ENCODE measurements at regions of chr17 and their contacts with region 1.

Region 1: DNA sequence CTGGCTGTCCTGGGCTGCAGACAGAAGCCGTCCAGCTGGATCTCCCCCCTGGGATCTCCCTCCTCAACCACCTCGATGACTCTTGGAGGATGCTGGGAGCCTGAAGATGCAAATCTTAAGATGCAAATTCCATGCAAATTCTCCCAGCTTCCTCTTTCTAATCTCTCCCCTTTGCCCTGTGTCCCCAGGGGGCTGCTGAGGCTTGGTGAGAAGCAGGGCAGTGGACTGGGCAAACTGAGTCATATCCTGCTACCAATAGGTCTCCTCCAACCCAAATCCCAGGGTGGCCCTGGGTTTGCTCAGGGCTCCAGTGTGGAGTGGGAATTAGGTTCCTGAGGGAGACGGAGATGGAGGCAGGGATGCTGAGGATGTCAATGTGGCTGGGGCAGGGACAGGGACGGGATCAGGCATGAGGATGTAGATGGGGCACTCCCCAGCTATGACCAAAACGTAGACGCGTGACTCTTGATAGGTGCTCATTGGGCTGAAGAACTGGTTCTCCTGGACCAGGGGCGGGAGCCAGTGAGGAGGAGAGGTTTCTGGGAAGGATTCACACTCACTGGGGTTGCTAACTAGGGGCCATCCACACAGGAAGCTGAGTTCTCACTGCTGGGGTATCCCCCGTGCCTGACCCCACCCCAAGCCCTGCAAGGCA is 3.6 kb upstream of the ALOX12B start:
- DNase-seq: no peak
- H3K4me3 ChIP-seq: no peak overlapping the region
- H3K4me3 Mint-ChIP-seq: no peak overlapping the region
- H3K27ac ChIP-seq: no peak overlapping the region
- H3K27ac Mint-ChIP-seq: no peak overlapping the region
- H3K4me1 ChIP-seq: peaks cover 4% of the 10 kb centered on the region
- H3K4me1 Mint-ChIP-seq: peaks cover 6 to 7% (median 7%) of the 10 kb centered on the region in 3 donors
- H3K27me3 ChIP-seq: peaks cover 5% of the 10 kb centered on the region
- H3K27me3 Mint-ChIP-seq: peaks cover 25 to 42% of the 10 kb centered on the region in 2 donors

Region 2: GRCh38 chr17:8048236-8048635 is 42.9 kb before region 1 on chr17:
- CTCF ChIA-PET with region 1: no interaction called
- POLR2A ChIA-PET with region 1: no interaction called
- DNase-seq: no peak
- H3K4me3 ChIP-seq: no peak overlapping the region
- H3K4me3 Mint-ChIP-seq: no peak overlapping the region
- H3K27ac ChIP-seq: no peak overlapping the region
- H3K27ac Mint-ChIP-seq: peak overlapping the region in 1 of 8 donors; percentile 76
- H3K4me1 ChIP-seq: no peaks in the 10 kb centered on the region
- H3K4me1 Mint-ChIP-seq: no peaks in the 10 kb centered on the region
- H3K27me3 ChIP-seq: no peaks in the 10 kb centered on the region
- H3K27me3 Mint-ChIP-seq: peaks cover 6 to 9% of the 10 kb centered on the region in 2 donors

Region 3: DNA sequence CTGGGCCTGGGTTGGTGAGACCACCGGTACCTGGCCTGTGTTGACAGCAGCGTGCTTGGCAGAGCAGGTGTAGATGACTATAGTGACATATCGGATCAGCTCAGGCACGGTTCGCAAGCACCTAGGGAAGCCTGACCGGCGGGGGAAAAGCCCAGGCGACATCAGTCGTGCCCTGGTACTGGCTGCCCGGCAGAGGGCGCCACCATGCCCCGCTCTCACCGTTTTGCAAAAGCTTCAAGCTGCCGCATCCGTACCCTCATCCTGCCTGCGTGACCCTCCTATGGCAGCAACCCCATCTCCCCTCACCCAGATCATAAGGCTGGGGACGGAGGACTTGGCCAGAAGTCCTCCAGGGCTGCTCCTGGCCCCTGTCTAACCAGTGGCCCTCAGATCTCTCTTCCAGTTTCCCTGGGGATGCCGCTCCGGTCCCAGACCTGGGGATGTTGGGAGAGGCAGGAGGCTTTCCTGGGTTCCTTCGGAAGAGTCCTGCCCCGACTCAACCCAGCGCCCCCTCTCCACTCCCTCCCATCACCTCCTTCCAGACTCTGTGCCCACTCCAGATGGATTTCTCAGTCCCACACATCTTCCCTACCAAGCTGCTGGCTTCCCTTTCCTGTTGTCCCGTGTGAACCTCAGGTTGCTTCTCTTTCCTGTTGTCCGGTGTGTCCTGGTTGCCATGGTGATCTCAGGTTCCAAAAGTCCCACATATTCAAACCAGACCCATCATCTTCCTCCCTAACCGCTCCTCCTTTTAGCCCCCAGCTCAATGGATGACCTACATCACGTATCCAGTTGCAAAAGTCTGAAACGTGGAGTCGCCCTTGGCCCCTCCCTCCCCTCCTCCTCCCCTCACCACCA is 17.3 kb before region 1 on chr17:
- CTCF ChIA-PET with region 1: interaction called, 34 read pairs
- POLR2A ChIA-PET with region 1: no interaction called
- DNase-seq: peak; percentile 70 to 85 (median 80)
- H3K4me3 ChIP-seq: peak overlapping the region; percentile 51
- H3K4me3 Mint-ChIP-seq: peak overlapping the region; percentile 16 to 86 (median 81)
- H3K27ac ChIP-seq: no peak overlapping the region
- H3K27ac Mint-ChIP-seq: peak overlapping the region in 5 of 8 donors; percentile 47 to 91 (median 78)
- H3K4me1 ChIP-seq: peaks cover 25% of the 10 kb centered on the region
- H3K4me1 Mint-ChIP-seq: peaks cover 16 to 25% (median 19%) of the 10 kb centered on the region in 3 donors
- H3K27me3 ChIP-seq: peaks cover 17% of the 10 kb centered on the region
- H3K27me3 Mint-ChIP-seq: peaks cover 36 to 47% of the 10 kb centered on the region in 2 donors

Region 4: DNA sequence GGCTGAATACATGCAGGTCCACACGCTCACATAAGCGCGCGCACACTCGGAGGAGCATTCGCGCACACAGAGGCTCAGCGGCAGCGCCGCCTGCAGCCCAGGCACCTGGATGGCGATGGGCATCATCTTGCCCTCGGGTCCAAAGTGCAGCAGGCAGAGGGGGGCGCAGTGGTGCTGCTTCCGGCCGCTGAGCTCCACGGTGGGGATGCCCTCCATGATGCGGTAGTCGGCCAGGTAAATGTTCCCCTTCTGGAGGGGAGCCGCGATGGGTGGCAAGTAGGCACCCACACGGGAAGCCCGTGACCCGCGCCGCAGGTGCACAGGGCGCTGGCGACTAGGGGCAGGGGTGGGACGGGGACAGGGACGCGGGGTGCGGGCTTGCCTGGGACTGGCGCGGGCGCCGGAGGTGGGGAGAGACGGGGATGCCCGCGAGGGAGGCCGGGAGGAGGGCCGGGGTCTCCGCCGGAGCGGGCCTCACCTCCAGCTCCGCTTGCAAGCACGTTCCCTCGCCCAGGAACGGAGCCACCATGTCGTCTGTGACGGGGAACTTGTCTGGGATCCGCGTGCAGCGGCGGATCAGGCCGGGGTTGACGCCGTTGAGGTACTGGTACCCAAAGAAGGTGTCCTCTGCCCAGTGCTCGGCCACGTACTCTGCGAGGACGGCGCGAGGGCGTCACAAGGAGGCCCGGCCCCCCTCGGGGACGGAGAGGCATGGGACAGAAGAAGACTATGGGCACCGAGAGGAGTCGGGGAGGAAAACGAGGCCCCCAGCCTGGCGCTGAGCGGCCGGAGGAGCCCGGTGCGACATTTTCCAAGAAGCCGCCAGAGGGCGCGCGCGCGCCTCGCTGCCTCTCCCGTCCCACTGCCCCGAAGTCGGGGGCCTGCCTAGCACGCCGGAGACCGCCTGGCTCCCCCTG is 11.6 kb before region 1 on chr17:
- CTCF ChIA-PET with region 1: interaction called, 34 read pairs
- POLR2A ChIA-PET with region 1: interaction called, 3 read pairs
- DNase-seq: peak; percentile 68 to 85 (median 72)
- H3K4me3 ChIP-seq: peak overlapping the region; percentile 78
- H3K4me3 Mint-ChIP-seq: peak overlapping the region; percentile 70 to 95 (median 92)
- H3K27ac ChIP-seq: peak overlapping the region; percentile 57
- H3K27ac Mint-ChIP-seq: peak overlapping the region; percentile 24 to 92 (median 84)
- H3K4me1 ChIP-seq: peaks cover 15% of the 10 kb centered on the region
- H3K4me1 Mint-ChIP-seq: peaks cover 4 to 20% (median 16%) of the 10 kb centered on the region in 3 donors
- H3K27me3 ChIP-seq: peaks cover 8% of the 10 kb centered on the region
- H3K27me3 Mint-ChIP-seq: peaks cover 7 to 10% of the 10 kb centered on the region in 2 donors

Region 5: DNA sequence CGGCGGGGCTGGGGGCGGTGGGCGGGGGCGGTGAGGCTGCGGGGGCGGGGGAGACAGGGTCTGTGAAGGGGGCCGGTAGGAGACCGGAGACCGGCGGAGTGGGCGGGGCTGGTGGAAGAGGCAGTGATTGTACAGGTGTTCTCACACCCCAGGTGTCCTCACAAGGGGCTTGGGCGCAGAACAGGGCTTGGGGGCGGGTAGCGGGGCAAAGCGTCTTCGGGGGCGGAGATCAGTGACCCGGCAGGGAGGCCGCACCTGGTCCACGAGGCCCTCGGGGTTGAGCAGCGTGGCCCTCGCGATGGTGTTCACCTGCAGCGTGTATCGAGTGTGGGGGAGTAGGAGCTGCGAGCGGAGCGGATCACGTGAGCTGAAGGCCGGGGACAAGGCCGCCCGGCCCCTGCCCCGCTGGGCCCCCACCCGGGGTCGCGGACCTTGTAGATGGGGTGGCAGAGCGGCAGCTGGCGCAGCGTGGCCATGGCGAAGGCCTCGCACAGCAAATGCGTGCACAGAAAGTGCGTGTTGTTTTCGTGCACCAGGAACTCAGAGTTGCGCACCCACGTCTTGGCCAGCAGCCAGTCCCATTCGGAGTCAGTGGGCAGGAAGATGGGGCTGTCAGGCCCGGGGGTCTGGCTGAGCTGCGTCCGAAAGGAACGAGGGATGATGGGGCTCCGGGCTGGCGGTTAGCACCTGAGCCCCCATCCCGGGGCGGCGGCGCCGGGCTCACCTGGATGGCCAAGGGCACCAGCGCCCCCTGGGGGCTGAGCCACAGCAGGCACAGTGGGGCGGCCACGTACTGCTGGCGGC is 18.7 kb after region 1 on chr17:
- CTCF ChIA-PET with region 1: interaction called, 97 read pairs
- POLR2A ChIA-PET with region 1: no interaction called
- DNase-seq: peak; percentile 74 to 86 (median 76)
- H3K4me3 ChIP-seq: peak overlapping the region; percentile 65
- H3K4me3 Mint-ChIP-seq: peak overlapping the region in 5 of 7 donors; percentile 66 to 72 (median 69)
- H3K27ac ChIP-seq: no peak overlapping the region
- H3K27ac Mint-ChIP-seq: peak overlapping the region in 1 of 8 donors; percentile 23
- H3K4me1 ChIP-seq: no peaks in the 10 kb centered on the region
- H3K4me1 Mint-ChIP-seq: peaks cover 0 to 5% (median 2%) of the 10 kb centered on the region in 3 donors
- H3K27me3 ChIP-seq: peaks cover 27% of the 10 kb centered on the region
- H3K27me3 Mint-ChIP-seq: peaks cover 27 to 34% of the 10 kb centered on the region in 2 donors

Region 6: GRCh38 chr17:8156246-8156992 is 65.3 kb after region 1 on chr17:
- CTCF ChIA-PET with region 1: interaction called, 16 read pairs
- POLR2A ChIA-PET with region 1: no interaction called
- DNase-seq: peak; percentile 100
- H3K4me3 ChIP-seq: peak overlapping the region; percentile 100
- H3K4me3 Mint-ChIP-seq: no peak overlapping the region
- H3K27ac ChIP-seq: peak overlapping the region; percentile 100
- H3K27ac Mint-ChIP-seq: no peak overlapping the region
- H3K4me1 ChIP-seq: peaks cover 77% of the 10 kb centered on the region
- H3K4me1 Mint-ChIP-seq: peaks cover 32 to 73% (median 48%) of the 10 kb centered on the region in 3 donors
- H3K27me3 ChIP-seq: no peaks in the 10 kb centered on the region
- H3K27me3 Mint-ChIP-seq: peaks cover 0 to 14% of the 10 kb centered on the region in 2 donors

Region 7: DNA sequence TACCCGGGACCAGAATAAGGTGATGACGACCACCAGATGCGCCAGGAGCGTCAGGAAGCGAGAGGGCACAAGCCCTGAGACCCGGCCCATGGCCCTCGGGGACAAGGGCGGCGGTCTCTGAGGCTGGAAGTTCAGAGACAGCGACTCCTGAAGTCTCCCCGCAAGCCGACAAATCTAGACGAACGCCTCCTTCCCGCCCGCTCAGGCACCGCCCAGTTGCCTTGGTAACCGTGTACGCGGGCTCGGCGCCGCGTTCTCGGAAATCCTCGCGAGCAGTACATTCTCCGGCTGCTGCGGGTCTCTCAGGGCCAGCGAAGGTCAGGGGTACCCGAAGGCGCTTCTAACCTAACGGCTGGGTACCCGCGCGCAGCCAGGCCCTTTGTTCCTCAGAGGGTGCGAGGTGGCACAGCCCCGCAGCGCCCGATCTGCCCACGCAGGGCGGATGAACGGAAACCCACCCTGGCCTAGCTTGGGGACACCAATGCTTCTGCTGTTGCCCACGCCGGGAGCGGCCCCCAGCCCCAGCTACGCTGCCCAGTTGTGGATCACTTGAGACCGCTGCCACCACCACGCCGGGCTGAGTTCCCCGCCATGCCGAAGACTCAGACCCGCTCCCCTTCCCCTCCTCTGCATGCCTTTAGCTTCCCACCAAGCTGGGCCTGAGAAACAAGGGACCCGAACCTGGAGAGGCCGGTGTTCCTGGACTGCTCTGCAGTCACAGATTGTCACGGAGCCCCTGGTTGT is 85.2 kb after region 1 on chr17 and contains the start of gene TMEM107:
- CTCF ChIA-PET with region 1: no interaction called
- POLR2A ChIA-PET with region 1: no interaction called
- DNase-seq: peak; percentile 81 to 92 (median 82)
- H3K4me3 ChIP-seq: peak within 1 kb of the TSS; percentile 76
- H3K4me3 Mint-ChIP-seq: peak within 1 kb of the TSS; percentile 89 to 96 (median 93)
- H3K27ac ChIP-seq: peak within 1 kb of the TSS; percentile 81
- H3K27ac Mint-ChIP-seq: peak within 1 kb of the TSS; percentile 92 to 100 (median 96)
- H3K4me1 ChIP-seq: peaks cover 44% of the 10 kb centered on the region
- H3K4me1 Mint-ChIP-seq: peaks cover 40 to 52% (median 51%) of the 10 kb centered on the region in 3 donors
- H3K27me3 ChIP-seq: no peaks in the 10 kb centered on the region
- H3K27me3 Mint-ChIP-seq: peaks cover 0 to 3% of the 10 kb centered on the region in 2 donors
- total RNA-seq, gene TMEM107: 21.3 to 22.4 TPM

Region 8: DNA sequence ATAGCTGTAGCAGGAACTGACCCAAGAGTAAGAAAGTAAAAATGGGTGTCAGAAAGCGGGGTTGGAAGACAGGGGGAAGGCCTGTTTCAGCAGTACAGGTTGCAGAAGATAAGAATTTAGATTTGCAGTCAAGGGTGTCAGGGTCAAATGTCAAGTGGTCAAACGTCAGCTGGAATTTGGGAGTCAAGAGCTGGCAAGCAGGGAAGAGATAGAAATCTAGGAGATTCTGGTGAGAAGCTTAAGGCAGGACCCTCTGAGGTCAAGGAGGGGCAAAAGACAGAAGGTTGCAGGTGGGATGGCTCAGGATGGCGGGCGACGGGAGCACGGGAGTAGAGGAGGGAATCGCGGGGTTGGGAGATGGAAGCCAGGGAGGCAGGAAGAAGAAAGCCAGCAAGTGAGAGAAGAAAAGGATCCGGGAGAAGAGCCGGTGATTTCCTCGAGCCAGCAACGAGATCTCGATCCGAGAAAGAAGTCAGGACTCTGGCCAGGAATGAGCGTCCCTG is 203.7 kb after region 1 on chr17:
- CTCF ChIA-PET with region 1: interaction called, 14 read pairs
- POLR2A ChIA-PET with region 1: interaction called, 5 read pairs
- DNase-seq: no peak
- H3K4me3 ChIP-seq: peak overlapping the region; percentile 87
- H3K4me3 Mint-ChIP-seq: peak overlapping the region; percentile 89 to 96 (median 92)
- H3K27ac ChIP-seq: peak overlapping the region; percentile 81
- H3K27ac Mint-ChIP-seq: peak overlapping the region; percentile 86 to 99 (median 95)
- H3K4me1 ChIP-seq: peaks cover 17% of the 10 kb centered on the region
- H3K4me1 Mint-ChIP-seq: peaks cover 31 to 44% (median 31%) of the 10 kb centered on the region in 3 donors
- H3K27me3 ChIP-seq: no peaks in the 10 kb centered on the region
- H3K27me3 Mint-ChIP-seq: peaks cover 0 to 5% of the 10 kb centered on the region in 2 donors

Region 9: DNA sequence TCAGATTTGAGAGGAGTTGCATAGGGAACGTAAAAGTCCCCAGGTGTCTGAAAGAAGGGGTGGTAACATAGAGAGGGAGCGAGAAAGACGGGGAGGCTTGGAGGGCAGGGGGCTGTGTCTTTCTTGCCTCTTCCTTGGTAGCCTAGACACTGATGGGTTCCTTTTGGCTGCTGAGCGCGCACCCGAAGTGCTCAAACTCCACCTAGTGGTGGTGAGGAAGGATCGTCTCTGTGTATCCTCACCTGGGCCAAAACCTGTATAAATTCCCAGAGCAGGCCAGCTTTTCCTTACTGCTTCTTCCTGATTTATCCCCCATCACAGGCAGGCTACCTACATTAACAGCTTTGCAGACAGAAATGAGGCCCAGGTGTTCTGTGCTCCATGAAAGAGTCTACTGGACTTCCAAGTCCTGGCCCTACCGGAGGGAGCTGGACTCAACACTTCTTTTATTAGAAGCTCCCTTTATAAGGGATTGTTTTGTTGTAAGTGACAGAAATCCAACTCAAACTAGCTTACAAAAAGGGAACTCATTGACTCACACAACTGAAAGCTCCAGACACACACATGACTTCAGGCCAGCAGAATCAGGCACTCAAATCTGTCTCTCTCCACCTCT is 209.6 kb after region 1 on chr17:
- CTCF ChIA-PET with region 1: interaction called, 14 read pairs
- POLR2A ChIA-PET with region 1: interaction called, 5 read pairs
- DNase-seq: peak; percentile 43 to 79 (median 66)
- H3K4me3 ChIP-seq: no peak overlapping the region
- H3K4me3 Mint-ChIP-seq: peak overlapping the region in 1 of 7 donors; percentile 31
- H3K27ac ChIP-seq: no peak overlapping the region
- H3K27ac Mint-ChIP-seq: peak overlapping the region in 6 of 8 donors; percentile 4 to 86 (median 24)
- H3K4me1 ChIP-seq: peaks cover 10% of the 10 kb centered on the region
- H3K4me1 Mint-ChIP-seq: peaks cover 9 to 12% (median 11%) of the 10 kb centered on the region in 3 donors
- H3K27me3 ChIP-seq: no peaks in the 10 kb centered on the region
- H3K27me3 Mint-ChIP-seq: no peaks in the 10 kb centered on the region